ENCODE measurements at regions of chr4 and their contacts with region 1.

Region 1: DNA sequence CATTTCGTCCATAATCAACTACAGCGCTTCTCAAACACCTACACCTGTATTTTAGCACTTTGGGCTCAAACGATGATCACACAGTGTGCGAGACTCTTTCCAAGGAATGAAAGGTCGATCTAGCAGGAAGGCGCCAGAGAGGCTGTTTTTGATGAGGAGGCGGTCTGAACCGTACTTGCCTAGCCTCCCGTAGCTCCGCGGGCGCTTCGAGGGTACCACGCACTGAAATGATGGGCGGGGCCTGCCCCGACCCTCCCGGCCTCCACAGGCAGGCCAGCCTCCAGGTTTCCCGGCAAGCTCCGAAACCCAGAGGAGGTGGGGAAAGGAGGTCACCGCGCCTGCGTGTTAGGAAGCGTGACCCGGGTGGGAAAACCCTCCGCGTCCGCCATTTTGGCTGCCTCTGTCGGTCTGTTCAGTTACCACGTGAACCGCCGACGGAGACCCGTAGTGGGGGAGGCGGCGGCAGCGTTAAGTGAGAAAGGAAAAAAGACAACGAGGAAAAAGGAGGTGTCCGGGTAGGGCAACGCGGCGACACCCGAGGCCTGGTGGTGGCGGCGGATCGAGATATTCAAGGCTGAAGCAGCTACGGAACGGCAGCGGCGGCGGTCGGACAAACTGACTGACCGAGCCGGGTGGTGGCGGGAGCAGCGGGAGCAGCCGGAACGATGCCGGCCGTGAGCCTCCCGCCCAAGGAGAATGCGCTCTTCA is at the start of gene NAA15:
- H3K4me3 ChIP-seq: peak within 1 kb of the TSS; percentile 96
- H3K27ac ChIP-seq: peak within 1 kb of the TSS; percentile 70
- H3K4me1 ChIP-seq: no peaks in the 10 kb centered on the region
- CTCF ChIP-seq: no peak

Region 2: DNA sequence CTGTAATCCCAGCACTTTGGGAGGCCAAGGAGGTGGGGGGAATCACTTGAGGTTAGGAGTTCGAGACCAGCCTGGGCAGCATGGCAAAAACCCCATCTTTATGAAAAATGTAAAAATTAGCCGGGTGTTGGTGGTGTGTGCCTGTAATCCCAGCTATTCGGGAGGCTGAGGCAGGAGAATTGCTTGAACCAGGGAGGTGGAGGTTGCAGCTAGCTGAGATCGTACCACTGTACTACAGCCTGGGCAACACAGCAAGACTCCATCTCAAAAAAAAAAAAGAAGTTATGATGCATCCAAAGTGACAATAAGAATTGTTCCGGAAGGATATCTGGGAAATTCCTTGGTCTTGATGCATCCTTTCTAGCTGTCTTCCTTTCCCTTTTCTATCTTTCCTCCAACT is 278.4 kb before region 1 on chr4:
- CTCF ChIA-PET with region 1: no interaction called
- POLR2A ChIA-PET with region 1: no interaction called
- H3K4me3 ChIP-seq: no peak overlapping the region
- H3K27ac ChIP-seq: no peak overlapping the region
- H3K4me1 ChIP-seq: peaks cover 12% of the 10 kb centered on the region
- CTCF ChIP-seq: no peak

Region 3: GRCh38 chr4:139177868-139178611 is 123.2 kb before region 1 on chr4:
- CTCF ChIA-PET with region 1: interaction called, 4 read pairs
- POLR2A ChIA-PET with region 1: interaction called, 28 read pairs
- H3K4me3 ChIP-seq: peak overlapping the region; percentile 82
- H3K27ac ChIP-seq: peak overlapping the region; percentile 96
- H3K4me1 ChIP-seq: no peaks in the 10 kb centered on the region
- CTCF ChIP-seq: no peak

Region 4: DNA sequence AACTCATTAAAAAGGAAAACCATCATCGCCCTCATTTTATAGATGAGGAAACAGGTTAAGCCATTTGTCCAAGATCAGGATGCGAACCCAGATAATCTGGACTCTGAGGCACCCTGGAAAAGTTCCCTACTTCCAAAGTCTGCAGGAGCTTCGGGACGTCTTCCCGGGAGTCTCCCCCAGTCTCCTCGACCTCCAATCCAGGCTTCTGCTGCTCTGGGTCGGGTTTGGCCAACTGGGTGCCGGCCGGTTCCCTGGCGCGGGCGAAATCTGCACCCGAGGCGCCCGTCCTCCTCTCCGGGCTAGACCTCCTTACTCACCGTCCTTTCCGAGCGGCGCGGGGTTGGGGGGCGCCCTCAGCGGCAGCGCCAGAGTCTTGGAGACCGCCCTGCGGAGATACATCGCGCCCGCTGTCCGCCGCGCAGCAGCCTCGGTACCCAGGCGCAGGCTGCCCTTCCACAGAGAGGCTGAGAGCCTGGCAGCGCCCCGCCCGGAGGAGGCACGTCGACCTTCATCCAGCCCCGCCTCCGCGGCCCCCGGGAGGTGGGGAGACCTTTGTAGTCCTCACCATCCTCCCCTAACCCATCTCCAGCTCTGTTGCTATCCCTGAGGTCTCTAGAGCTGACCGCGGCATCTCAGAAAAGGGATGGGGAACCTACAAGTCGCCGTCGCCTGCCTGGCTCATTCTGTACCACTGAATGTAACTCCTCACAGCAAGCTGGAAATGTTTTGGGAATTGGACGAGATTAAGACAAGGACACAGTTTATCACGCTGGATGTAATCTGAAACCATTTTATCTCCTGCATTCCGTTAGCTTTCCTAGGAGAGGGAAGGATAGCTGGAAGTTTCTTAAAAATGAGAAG is 21.3 kb before region 1 on chr4 and contains the start of gene MGARP:
- CTCF ChIA-PET with region 1: interaction called, 12 read pairs
- POLR2A ChIA-PET with region 1: interaction called, 16 read pairs
- H3K4me3 ChIP-seq: peak within 1 kb of the TSS; percentile 59
- H3K27ac ChIP-seq: no peak within 1 kb of the TSS; the same call in 1 of the 2 replicates
- H3K4me1 ChIP-seq: no peaks in the 10 kb centered on the region
- CTCF ChIP-seq: peak; percentile 83

Region 5: DNA sequence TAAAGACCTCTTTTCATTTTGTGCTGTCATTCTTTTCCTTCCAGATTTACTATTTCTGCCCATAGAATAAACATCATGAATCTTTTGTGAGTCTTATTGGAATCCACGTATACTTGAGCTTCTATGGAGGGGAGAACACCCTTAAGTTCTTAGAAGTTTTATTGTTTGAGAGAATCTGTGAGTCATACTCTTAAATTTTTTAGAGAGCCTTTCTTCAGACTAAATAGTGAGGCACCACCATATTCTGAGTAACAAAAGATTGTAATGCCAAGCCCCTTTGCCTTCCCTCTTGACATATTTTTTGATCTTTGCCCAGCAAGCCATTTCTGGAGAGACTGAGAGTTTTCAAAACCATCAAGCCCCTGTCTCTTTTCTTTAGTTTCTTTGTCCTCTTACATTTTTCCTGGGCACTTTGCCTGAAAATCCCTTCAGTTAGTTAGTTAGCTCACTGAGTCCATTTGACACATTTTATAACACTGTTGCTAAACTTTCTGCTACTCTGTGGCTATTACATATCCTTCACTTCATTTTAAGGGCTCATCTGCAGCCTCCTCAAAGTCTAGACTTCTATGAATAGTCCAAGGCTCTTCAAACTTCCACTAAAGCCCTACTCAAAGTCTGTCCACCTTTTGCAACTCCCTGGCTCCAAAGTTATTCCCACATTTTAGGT is 66.3 kb after region 1 on chr4:
- CTCF ChIA-PET with region 1: no interaction called
- POLR2A ChIA-PET with region 1: no interaction called
- H3K4me3 ChIP-seq: no peak overlapping the region
- H3K27ac ChIP-seq: no peak overlapping the region
- H3K4me1 ChIP-seq: no peaks in the 10 kb centered on the region
- CTCF ChIP-seq: no peak